ENCODE measurements at regions of chr19 and their contacts with region 1.

Region 1: DNA sequence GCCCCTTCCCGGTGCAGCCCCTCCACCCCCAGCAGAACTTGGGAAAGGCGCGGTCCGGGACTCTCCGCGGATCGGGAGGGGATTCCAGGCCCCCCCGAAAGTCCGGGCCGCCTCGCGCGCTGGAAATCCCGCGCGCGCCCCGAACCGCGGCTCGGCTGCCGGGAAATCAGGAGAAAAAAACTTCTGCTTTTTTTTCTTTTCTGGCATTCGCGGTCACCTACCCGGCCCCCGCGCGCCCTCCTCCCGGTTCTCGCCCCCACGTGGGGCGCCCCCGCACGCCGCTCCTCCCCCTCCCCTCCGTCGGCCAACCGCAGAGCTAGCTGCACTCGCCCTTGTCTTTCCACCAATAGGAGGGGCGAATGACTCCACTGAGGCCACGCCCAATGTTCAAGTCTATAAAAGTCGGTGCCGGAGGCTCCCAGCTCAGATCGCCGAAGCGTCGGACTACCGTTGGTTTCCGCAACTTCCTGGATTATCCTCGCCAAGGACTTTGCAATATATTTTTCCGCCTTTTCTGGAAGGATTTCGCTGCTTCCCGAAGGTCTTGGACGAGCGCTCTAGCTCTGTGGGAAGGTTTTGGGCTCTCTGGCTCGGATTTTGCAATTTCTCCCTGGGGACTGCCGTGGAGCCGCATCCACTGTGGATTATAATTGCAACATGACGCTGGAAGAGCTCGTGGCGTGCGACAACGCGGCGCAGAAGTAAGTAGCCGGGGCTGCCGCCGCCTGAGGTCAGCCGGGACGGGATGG is at the start of gene GADD45B:
- DNase-seq: peak; percentile 95 to 98 (median 97)
- ATAC-seq: peak; percentile 79
- H3K4me3 ChIP-seq: peak within 1 kb of the TSS; percentile 92 to 97
- H3K27ac ChIP-seq: peak within 1 kb of the TSS; percentile 87 to 90
- H3K4me1 ChIP-seq: peaks cover 9 to 25% of the 10 kb centered on the region in 2 donors
- H3K27me3 ChIP-seq: no peaks in the 10 kb centered on the region
- CTCF ChIP-seq: no peak
- polyA plus RNA-seq, gene GADD45B: 7.5 to 31.5 (median 12.0) TPM

Region 2: DNA sequence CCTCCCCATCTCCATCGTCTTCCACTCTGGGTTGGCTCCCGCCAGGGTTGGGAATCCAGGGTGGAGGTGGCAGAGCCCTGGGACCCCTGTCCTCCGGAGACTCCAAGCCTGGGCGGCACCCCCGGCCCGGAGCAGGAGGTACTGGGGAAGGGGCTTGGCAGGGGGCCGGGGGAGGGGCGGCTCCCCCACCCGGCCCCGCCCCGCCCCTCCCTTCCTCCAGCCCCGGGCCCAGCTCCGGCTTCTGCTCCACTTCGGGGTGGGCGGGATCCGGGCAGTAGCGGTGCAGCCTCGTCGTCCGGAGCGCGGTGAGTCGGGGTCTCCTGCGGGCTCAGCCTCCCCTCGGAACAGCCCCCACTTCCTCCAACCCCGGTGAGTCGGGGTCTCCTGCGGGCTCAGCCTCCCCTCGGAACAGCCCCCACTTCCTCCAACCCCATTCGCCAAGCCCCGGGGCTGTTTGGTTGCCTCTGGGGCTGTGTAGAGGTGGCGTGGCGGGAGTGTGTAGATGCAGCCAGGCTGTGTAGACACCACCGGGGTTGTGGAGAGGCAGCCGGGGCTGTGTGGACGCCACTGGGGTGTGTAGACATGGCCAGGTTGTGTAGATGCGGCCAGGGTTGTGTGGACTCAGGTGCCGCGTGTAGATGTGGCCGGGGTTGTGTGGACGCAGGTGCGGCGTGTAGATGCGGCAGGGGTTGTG is 115.7 kb before region 1 on chr19 and contains the start of gene TMPRSS9:
- intact Hi-C with region 1: no loop called
- DNase-seq: no peak
- ATAC-seq: no peak
- H3K4me3 ChIP-seq: no peak within 1 kb of the TSS
- H3K27ac ChIP-seq: no peak within 1 kb of the TSS
- H3K4me1 ChIP-seq: no peaks in the 10 kb centered on the region
- H3K27me3 ChIP-seq: peaks cover 16 to 57% of the 10 kb centered on the region in 2 donors
- CTCF ChIP-seq: no peak
- polyA plus RNA-seq, gene TMPRSS9: 0.45 to 1.1 (median 0.49) TPM

Region 3: GRCh38 chr19:2381148-2381820 is 94.6 kb before region 1 on chr19:
- intact Hi-C with region 1: no loop called
- DNase-seq: no peak
- ATAC-seq: no peak
- H3K4me3 ChIP-seq: no peak overlapping the region
- H3K27ac ChIP-seq: no peak overlapping the region
- H3K4me1 ChIP-seq: peaks cover 0 to 18% of the 10 kb centered on the region in 2 donors
- H3K27me3 ChIP-seq: peaks cover 0 to 47% of the 10 kb centered on the region in 2 donors
- CTCF ChIP-seq: no peak

Region 4: GRCh38 chr19:2398735-2399305 is 77.1 kb before region 1 on chr19:
- intact Hi-C with region 1: no loop called
- DNase-seq: no peak
- ATAC-seq: no peak
- H3K4me3 ChIP-seq: no peak overlapping the region
- H3K27ac ChIP-seq: no peak overlapping the region
- H3K4me1 ChIP-seq: peaks cover 0 to 4% of the 10 kb centered on the region in 2 donors
- H3K27me3 ChIP-seq: peaks cover 0 to 15% of the 10 kb centered on the region in 2 donors
- CTCF ChIP-seq: no peak

Region 5: DNA sequence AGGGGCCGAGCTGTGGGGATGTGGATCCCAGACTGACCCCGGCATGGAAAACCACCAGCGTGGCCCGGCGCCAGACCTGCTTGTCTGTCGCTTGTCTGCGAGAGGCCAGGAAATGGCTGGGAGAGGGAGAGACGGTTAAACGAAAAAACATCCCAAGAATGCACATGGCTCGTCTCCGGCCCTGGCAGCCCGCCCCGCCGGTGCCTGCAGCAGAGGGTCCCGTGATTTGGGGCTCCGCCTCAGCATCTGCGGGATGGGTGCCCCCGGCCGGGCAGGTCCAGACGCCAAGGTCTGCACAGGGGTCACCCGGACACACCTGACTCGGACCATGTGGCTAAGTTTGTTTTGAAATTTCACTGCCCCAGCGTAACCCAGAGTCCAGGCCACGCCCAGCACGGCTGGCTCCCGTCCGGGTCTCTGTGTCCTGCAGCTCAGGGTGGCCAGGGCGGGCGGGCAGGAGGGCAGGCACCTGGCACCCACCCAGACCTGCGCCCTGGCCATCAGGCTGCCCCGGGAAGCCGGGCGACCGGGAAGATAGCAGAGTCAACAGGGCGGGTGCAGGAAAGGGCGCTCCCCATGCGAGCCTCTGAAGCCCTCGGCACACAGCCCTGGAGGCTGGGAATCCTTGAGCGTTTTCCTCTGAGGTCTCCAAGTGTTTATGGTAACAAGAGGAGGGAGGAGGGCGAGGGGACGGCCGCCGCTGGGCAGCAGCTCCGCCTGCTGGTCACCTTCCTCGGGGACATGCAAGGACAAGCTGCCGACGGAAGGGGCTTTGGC is 103.2 kb after region 1 on chr19:
- intact Hi-C with region 1: loop called in 1 of 2 experiments (anchors 10 kb)
- DNase-seq: peak; percentile 74 to 96 (median 89)
- ATAC-seq: peak; percentile 91
- H3K4me3 ChIP-seq: peak overlapping the region; percentile 33 to 38
- H3K27ac ChIP-seq: peak overlapping the region; percentile 58 to 76
- H3K4me1 ChIP-seq: peaks cover 20 to 38% of the 10 kb centered on the region in 2 donors
- H3K27me3 ChIP-seq: peaks cover 0 to 8% of the 10 kb centered on the region in 2 donors
- CTCF ChIP-seq: peak; percentile 89 to 92

Region 6: DNA sequence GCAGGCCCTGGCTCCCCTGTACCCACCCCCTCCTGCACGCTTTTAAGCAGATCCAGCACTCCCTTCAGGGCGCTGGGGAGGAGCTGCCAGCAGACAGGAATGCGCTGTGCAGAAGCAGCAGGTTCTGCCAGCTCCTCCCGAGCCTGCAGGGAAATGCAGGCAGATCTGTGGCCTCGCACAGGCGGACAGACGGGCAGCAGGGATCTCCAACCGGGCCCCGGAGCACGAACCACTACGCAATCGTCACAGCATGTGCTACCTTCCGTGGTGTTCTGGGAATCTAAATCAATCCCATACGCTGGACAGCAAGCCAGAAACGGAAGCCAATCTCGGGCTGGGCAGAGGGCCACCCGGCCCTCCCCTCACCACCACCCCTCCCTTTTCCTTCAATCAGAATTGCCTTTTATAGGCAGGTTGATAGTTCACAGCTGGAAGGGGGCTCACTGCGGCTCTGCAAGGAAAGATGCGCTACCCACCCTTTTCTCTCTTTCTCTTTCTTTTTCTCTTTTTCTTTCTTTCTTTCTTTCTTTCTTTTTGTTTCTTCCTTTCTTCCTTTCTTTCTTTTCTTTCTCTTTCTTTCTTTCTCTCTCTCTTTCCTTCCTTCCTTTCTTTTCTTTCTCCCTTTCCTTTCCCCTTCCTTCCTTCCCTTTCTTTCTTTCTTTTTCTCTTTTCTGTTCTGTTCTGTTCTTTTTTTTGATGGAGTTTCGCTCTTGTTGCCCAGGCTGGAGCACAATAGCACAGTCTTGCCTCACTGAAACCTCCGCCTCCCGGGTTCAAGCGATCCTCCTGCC is 126.7 kb after region 1 on chr19:
- intact Hi-C with region 1: loop called in 1 of 2 experiments (anchors 10 kb)
- DNase-seq: peak in 2 of 4 donors; percentile 57 to 76
- ATAC-seq: peak; percentile 70
- H3K4me3 ChIP-seq: no peak overlapping the region
- H3K27ac ChIP-seq: peak overlapping the region; percentile 19 to 55
- H3K4me1 ChIP-seq: peaks cover 16 to 39% of the 10 kb centered on the region in 2 donors
- H3K27me3 ChIP-seq: no peaks in the 10 kb centered on the region
- CTCF ChIP-seq: no peak

Measured in left lung (tissue), 14 donors.